ENCODE measurements at regions of chr16 and their contacts with region 1.

Region 1: DNA sequence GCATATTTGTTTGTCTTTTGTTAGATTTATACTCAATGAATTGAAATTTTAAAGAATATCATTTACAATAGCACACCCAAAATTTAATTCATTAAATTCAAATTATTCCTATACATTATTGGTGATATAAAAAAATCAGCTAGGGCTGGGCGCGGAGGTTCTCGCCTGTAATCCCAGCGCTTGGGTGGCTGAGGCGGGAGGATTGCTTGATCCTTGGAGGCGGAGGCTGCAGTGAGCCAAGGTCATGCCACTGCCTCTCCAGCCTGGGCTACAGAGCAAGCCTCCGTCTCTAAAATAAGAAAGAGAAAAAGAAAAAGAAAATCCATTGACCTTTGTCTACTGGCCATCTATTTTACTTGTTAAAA is 4.5 kb upstream of the PRDM7 start:
- DNase-seq: no peak
- CTCF ChIP-seq: no peak

Region 2: DNA sequence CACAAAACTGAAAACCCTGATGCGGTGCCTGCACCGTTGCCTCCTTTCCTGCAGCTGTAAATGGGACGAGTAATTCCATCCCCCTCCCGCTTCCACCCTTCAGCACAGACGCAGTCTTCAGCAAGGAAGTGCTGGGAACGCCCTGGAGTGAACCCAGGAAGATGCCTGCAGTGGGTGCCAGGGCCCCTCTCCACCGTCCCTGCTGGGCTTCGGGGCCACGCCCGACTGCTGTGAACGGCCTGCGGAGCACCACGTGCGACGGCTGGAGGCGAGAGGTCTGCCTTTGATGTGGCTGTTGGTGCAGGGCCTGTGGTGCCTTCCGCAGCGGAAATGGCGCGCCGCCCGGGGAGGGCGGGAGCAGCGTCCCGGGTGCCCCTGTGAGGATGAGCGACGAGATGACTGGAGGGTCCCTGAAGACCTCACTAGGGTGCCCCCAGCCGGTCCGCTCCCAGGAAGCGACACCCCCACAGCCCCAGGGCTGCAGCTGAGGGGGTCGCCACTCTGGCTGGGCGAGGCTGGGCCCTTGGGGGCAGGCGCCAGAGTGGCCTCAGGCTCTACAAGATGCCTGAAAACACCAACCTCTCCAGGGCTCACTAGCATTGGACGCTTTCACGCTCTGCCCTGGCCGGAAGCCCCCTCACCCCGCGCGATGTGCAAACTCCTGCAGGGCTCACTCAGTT is 163.7 kb before region 1 on chr16:
- CTCF ChIA-PET with region 1: no interaction called
- POLR2A ChIA-PET with region 1: no interaction called
- DNase-seq: peak; percentile 89
- CTCF ChIP-seq: no peak

Region 3: DNA sequence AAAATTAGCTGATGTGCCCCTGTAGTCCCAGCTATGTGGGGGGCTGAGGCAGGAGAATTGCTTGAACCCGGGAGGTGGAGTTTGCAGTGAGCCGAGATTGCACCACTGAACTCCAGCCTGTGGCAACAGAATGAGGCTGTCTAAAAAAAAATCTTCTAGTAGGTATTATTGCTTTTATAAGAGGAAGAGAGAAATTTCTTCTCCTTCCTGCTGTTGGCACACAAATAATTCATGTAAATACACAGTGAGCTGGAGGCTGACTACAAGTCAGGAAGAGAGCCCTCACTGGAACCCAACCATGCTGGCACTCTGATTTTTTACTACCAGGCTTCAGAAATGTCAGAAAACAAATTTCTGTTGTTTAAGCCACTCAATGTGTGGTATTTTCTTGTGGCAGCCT is 11.1 kb before region 1 on chr16:
- CTCF ChIA-PET with region 1: interaction called, 23 read pairs
- POLR2A ChIA-PET with region 1: no interaction called
- DNase-seq: no peak
- CTCF ChIP-seq: no peak

Measured in GM10248 (cell line).